SK-N-SH (cell line): ENCODE measurements at regions of chr14 and their contacts with region 1.

Region 1: DNA sequence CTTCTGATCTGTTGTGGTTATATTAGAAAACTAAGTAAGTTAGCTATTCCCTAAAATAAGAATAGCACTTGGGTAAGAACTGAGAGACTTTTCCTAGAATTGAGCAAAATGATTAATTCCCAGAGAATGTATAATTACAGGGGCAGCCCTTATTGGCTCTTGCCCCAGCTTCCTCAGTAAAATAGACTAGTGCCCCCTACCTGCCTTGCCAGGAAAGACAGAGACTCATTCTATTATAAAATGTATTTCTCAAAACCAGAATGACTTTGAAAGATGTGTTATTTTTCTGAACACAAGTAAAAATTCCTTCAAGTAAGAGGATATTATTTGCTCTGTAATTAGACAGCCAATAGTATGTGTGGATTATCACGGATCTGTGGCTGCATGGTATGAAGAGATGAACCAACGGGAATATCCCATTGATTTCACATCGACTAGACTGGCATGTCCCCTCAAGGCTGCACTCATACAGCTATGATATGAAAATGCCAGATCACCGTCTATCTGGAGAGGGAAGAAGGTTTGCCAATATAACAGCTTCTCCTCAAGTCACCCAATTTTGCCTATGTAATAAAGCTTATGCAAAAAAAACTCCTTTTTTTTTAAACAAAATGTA is 7.4 kb upstream of the GLRX5 start:
- DNase-seq: peak; percentile 59
- H3K4me3 ChIP-seq: peak overlapping the region in 1 of 2 experiments; percentile 39; a peak in 1 of 4 replicates
- H3K27ac ChIP-seq: peak overlapping the region; percentile 36 to 79; a peak in 2 of 4 replicates
- H3K4me1 ChIP-seq: peaks cover 16 to 39% of the 10 kb centered on the region in 2 experiments
- H3K27me3 ChIP-seq: no peaks in the 10 kb centered on the region
- CTCF ChIP-seq: peak; percentile 90
- EP300 ChIP-seq: no peak
- RAD21 ChIP-seq: peak; percentile 81

Region 2: GRCh38 chr14:95460647-95461478 is 66.6 kb before region 1 on chr14:
- CTCF ChIA-PET with region 1: interaction called, 17 read pairs
- POLR2A ChIA-PET with region 1: no interaction called
- DNase-seq: no peak
- H3K4me3 ChIP-seq: no peak overlapping the region
- H3K27ac ChIP-seq: no peak overlapping the region
- H3K4me1 ChIP-seq: peaks cover 0 to 24% of the 10 kb centered on the region in 2 experiments; a peak in 1 of 4 replicates
- H3K27me3 ChIP-seq: no peaks in the 10 kb centered on the region
- CTCF ChIP-seq: no peak
- EP300 ChIP-seq: no peak
- RAD21 ChIP-seq: no peak

Region 3: DNA sequence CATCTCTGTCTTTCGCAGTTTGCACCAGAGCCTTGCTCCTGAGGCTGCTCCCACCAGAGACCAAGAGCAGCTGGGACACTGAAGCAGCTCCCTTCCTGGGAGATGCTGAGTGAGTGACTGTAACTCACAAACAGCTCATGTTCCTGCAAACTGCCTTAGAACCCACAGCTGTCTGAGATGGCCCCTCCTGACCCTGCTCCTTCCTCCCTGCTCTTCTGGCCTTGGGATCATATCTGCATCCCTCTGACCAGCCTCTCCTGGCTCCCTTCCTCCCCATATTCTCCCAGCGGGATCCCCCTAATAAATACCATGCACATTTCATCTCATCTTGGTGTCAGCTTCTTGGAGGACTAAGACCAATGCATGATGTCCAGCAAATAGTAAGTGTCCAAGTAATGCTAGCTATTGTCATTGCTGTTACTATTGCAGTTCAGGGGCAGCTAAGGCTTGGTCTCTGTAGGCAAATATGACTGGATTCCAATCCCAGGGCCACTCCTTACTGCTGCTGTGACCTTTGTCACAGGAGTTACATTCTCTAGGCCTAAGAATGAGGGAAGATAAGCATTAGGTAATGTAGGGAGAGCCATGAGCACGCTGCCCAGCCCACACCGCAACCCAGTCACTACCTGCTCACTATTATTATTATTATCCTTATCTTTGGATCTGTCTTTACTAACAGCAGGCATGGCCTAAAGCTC is 58.9 kb before region 1 on chr14:
- CTCF ChIA-PET with region 1: interaction called, 16 read pairs
- POLR2A ChIA-PET with region 1: interaction called, 3 read pairs
- DNase-seq: no peak
- H3K4me3 ChIP-seq: no peak overlapping the region
- H3K27ac ChIP-seq: no peak overlapping the region
- H3K4me1 ChIP-seq: peaks cover 0 to 30% of the 10 kb centered on the region in 2 experiments; a peak in 1 of 4 replicates
- H3K27me3 ChIP-seq: no peaks in the 10 kb centered on the region
- CTCF ChIP-seq: no peak
- EP300 ChIP-seq: no peak
- RAD21 ChIP-seq: no peak

Region 4: GRCh38 chr14:95495538-95496025 is 31.9 kb before region 1 on chr14:
- CTCF ChIA-PET with region 1: interaction called, 11 read pairs
- POLR2A ChIA-PET with region 1: no interaction called
- DNase-seq: no peak
- H3K4me3 ChIP-seq: no peak overlapping the region
- H3K27ac ChIP-seq: peak overlapping the region; percentile 67 to 83; a peak in 3 of 4 replicates
- H3K4me1 ChIP-seq: peaks cover 16 to 36% of the 10 kb centered on the region in 2 experiments; a peak in 2 of 4 replicates
- H3K27me3 ChIP-seq: no peaks in the 10 kb centered on the region
- CTCF ChIP-seq: no peak
- EP300 ChIP-seq: no peak
- RAD21 ChIP-seq: no peak

Region 5: GRCh38 chr14:95515596-95516552 is 11.6 kb before region 1 on chr14:
- CTCF ChIA-PET with region 1: interaction called, 27 read pairs
- POLR2A ChIA-PET with region 1: interaction called, 3 read pairs
- DNase-seq: peak; percentile 87
- H3K4me3 ChIP-seq: peak overlapping the region; percentile 61 to 76
- H3K27ac ChIP-seq: no peak overlapping the region; a peak in 2 of 4 replicates
- H3K4me1 ChIP-seq: peaks cover 47 to 51% of the 10 kb centered on the region in 2 experiments
- H3K27me3 ChIP-seq: no peaks in the 10 kb centered on the region
- CTCF ChIP-seq: peak; percentile 46
- EP300 ChIP-seq: no peak
- RAD21 ChIP-seq: peak; percentile 12; the same call in 1 of the 2 replicates

Region 6: GRCh38 chr14:95577067-95577800 is 49.7 kb after region 1 on chr14:
- CTCF ChIA-PET with region 1: no interaction called
- POLR2A ChIA-PET with region 1: no interaction called
- DNase-seq: no peak
- H3K4me3 ChIP-seq: no peak overlapping the region
- H3K27ac ChIP-seq: no peak overlapping the region
- H3K4me1 ChIP-seq: no peaks in the 10 kb centered on the region
- H3K27me3 ChIP-seq: no peaks in the 10 kb centered on the region; the same call in 1 of the 2 replicates
- CTCF ChIP-seq: no peak
- EP300 ChIP-seq: no peak
- RAD21 ChIP-seq: no peak

Region 7: GRCh38 chr14:95609387-95609990 is 82.0 kb after region 1 on chr14:
- CTCF ChIA-PET with region 1: no interaction called
- POLR2A ChIA-PET with region 1: no interaction called
- DNase-seq: peak; percentile 63
- H3K4me3 ChIP-seq: peak overlapping the region in 1 of 2 experiments; percentile 26; a peak in 1 of 4 replicates
- H3K27ac ChIP-seq: no peak overlapping the region
- H3K4me1 ChIP-seq: no peaks in the 10 kb centered on the region
- H3K27me3 ChIP-seq: no peaks in the 10 kb centered on the region; the same call in 1 of the 2 replicates
- CTCF ChIP-seq: peak; percentile 54
- EP300 ChIP-seq: no peak
- RAD21 ChIP-seq: peak; percentile 79